ENCODE measurements at regions of chr21 and their contacts with region 1.

Region 1: DNA sequence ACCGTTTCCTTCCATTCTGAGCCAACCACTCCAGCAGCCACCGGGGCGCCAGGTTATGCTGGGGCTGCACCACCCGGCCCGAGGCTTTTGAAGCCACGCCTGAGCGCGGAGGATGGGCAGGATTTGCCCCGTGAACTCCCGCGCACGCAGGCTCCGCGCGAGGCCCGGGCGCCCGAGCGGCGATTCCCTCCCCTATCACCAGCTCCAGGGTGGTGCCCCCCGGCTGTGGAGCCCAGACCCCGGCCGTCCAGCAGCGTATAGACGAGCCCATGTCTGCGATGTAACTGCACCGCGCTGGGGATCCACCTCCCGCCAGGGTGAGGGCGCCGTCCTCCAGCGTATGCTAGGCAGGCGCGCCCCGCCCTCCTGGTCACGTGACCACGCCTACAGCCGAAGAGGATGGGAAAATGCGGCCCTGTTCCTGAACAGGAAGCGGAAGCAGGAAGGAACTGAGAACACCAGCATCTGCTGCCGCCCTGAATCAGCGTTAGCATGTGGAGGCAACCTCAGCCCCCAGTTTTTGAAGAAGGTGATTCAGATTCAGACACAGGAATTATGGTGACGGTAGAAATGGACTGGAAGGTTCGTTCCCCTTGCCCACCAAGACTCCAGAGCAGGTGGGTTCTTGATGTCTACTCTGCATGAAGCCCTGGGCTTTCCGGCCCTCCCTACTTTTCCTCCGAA is 46.0 kb downstream of the VPS26C start:
- H3K4me3 Mint-ChIP-seq: peak overlapping the region; percentile 79
- H3K27ac Mint-ChIP-seq: peak overlapping the region; percentile 77
- H3K4me1 Mint-ChIP-seq: peaks cover 10% of the 10 kb centered on the region
- H3K27me3 Mint-ChIP-seq: peaks cover 12% of the 10 kb centered on the region

Region 2: GRCh38 chr21:37208056-37208721 is 12.9 kb before region 1 on chr21:
- intact Hi-C with region 1: loop called (anchors 1 kb)
- H3K4me3 Mint-ChIP-seq: peak overlapping the region; percentile 50
- H3K27ac Mint-ChIP-seq: peak overlapping the region; percentile 89
- H3K4me1 Mint-ChIP-seq: peaks cover 42% of the 10 kb centered on the region
- H3K27me3 Mint-ChIP-seq: no peaks in the 10 kb centered on the region

Region 3: GRCh38 chr21:37257967-37258877 is 37.1 kb after region 1 on chr21:
- intact Hi-C with region 1: loop called (anchors 5 kb)
- H3K4me3 Mint-ChIP-seq: peak overlapping the region; percentile 75
- H3K27ac Mint-ChIP-seq: peak overlapping the region; percentile 96
- H3K4me1 Mint-ChIP-seq: peaks cover 31% of the 10 kb centered on the region
- H3K27me3 Mint-ChIP-seq: no peaks in the 10 kb centered on the region

Region 4: DNA sequence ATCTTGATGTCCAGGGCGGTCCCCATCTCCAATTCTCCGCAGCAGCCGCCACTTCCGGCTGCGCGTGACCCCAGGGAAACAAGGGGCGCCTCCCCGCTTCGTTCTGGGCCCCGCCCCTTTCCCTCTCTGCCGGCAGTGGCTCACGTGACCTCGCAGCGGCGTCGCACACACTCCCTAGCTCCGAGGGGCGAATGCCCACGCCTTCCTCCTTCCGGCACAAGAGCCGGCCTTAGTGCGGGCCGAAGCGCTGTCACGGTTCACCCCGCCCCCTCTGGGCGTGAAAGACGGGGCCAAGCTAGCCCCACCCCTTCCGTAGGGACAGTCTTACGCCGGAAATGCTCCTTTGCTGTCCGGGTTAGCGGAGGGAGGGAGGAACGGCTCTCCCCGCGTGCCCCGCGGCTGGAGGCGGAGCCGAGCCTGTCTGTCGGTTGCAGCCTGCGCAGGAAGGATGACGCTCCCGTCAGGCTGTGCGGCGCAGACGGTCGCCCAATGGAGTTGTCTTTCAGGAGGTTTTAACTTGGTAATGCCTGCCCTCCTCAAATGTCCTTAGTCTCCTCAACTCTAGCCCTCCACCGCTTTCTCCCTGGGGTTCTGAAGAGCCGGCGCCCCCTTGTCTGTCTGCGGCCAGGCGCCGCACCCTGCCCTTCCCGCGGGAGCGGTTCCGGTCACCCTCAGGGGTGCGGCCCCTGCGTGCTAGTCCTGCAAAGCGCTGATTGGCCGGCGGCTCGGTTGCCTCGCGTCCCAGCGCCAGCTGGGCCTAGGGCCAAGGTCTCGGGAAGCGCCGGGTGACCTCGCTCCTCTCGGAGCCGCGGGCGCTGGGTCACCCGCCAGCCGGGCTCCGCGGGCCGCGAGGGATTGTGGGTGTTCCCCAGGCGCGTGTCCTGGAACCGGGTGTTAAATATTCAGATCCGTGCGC is 46.4 kb after region 1 on chr21 and contains the start of gene VPS26C:
- intact Hi-C with region 1: loop called (anchors 2 kb)
- H3K4me3 Mint-ChIP-seq: peak within 1 kb of the TSS; percentile 88
- H3K27ac Mint-ChIP-seq: peak within 1 kb of the TSS; percentile 99
- H3K4me1 Mint-ChIP-seq: peaks cover 19% of the 10 kb centered on the region
- H3K27me3 Mint-ChIP-seq: no peaks in the 10 kb centered on the region

Region 5: DNA sequence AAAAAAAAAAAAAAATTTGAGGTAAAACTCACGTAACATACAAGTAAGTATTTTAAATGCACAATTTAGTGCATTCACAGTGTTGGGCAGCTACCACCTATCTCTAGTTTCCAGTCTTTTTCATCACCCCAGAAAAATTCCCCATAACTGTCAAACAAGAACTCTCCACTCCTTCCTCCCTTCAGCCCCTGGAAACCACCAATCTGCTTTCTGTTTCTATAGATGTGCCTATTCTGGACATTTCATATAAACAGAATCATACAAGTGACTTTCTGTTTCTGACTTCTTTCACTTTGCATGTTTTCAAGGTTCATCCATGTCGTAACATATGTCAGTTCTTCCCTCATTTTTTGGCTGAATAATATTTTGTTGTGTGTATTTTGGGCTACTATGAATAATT is 1559.8 kb after region 1 on chr21:
- intact Hi-C with region 1: no loop called
- H3K4me3 Mint-ChIP-seq: no peak overlapping the region
- H3K27ac Mint-ChIP-seq: no peak overlapping the region
- H3K4me1 Mint-ChIP-seq: peaks cover 31% of the 10 kb centered on the region
- H3K27me3 Mint-ChIP-seq: peaks cover 82% of the 10 kb centered on the region